PC-3 (cell line): ENCODE measurements at regions of chrX and their contacts with region 1.

Region 1: GRCh38 chrX:54248309-54248708 is 65.3 kb upstream of the FAM120C start:
- DNase-seq: peak; percentile 61
- ATAC-seq: peak; percentile 81
- H3K4me3 ChIP-seq: no peak overlapping the region
- H3K27ac ChIP-seq: no peak overlapping the region
- H3K4me1 ChIP-seq: no peaks in the 10 kb centered on the region
- H3K27me3 ChIP-seq: no peaks in the 10 kb centered on the region
- CTCF ChIP-seq: peak; percentile 65

Region 2: GRCh38 chrX:54320070-54320469 is 71.8 kb after region 1 on chrX:
- CTCF ChIA-PET with region 1: no interaction called
- POLR2A ChIA-PET with region 1: no interaction called
- intact Hi-C with region 1: no loop called
- DNase-seq: no peak
- ATAC-seq: peak; percentile 38
- H3K4me3 ChIP-seq: no peak overlapping the region
- H3K27ac ChIP-seq: no peak overlapping the region
- H3K4me1 ChIP-seq: no peaks in the 10 kb centered on the region
- H3K27me3 ChIP-seq: no peaks in the 10 kb centered on the region
- CTCF ChIP-seq: no peak

Region 3: GRCh38 chrX:54439967-54440871 is 191.9 kb after region 1 on chrX and contains the start of gene TSR2:
- CTCF ChIA-PET with region 1: interaction called, 3 read pairs
- POLR2A ChIA-PET with region 1: no interaction called
- intact Hi-C with region 1: loop called (anchors 1 kb)
- DNase-seq: peak; percentile 86
- ATAC-seq: peak; percentile 94
- H3K4me3 ChIP-seq: peak within 1 kb of the TSS; percentile 97
- H3K27ac ChIP-seq: no peak within 1 kb of the TSS
- H3K4me1 ChIP-seq: peaks cover 7% of the 10 kb centered on the region; the same call in 1 of the 2 replicates
- H3K27me3 ChIP-seq: no peaks in the 10 kb centered on the region
- CTCF ChIP-seq: peak; percentile 39; the same call in 1 of the 2 replicates
- total RNA-seq, gene TSR2: 38.6 and 44.6 TPM in 2 replicates

Region 4: DNA sequence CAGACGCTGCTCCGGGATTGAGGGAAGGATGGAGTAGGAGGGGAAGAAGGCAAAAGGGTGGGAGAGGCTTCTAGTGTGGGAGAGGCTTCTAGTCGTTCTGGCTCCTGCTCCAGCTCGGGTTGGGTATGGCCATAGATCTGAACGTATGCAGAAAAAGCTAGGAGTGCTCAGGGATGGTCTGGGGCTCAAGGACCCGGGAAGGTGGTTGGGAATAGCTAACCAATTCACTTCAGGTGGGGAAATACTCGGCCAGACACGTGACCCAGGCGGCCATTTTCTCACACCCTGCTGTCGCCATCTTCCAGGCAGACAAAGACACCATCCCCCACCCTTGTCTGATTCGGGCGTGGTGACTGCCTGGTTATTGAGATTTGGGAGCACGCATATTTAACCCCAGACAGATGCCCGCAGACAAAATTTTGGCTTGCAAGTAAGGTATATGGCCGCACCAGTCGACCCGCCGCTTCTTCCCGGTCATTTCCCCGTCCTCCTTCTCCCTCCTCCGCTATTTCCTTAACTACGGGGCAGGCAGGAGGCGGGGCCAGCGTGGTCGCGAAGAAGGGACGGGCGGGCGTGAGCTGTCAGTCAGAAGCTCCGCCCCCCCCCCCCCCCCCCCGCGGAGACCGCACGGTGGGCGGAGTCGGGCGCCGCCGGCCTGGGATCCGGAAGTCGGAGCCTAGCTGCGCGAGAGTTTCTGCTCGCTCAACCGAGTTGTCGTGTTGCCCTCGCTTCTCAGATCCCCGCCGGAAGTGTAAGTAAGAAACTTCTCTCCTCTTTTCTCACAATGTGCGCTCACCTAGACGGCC is 281.4 kb after region 1 on chrX and contains the start of gene GNL3L:
- CTCF ChIA-PET with region 1: no interaction called
- POLR2A ChIA-PET with region 1: no interaction called
- intact Hi-C with region 1: loop called (anchors 10 kb)
- DNase-seq: peak; percentile 83
- ATAC-seq: peak; percentile 84
- H3K4me3 ChIP-seq: peak within 1 kb of the TSS; percentile 82
- H3K27ac ChIP-seq: peak within 1 kb of the TSS; percentile 83
- H3K4me1 ChIP-seq: peaks cover 20% of the 10 kb centered on the region
- H3K27me3 ChIP-seq: no peaks in the 10 kb centered on the region
- CTCF ChIP-seq: no peak
- total RNA-seq, gene GNL3L: 50.3 and 63.7 TPM in 2 replicates